Calu3 (cell line): ENCODE measurements at regions of chr5 and their contacts with region 1.

Region 1: DNA sequence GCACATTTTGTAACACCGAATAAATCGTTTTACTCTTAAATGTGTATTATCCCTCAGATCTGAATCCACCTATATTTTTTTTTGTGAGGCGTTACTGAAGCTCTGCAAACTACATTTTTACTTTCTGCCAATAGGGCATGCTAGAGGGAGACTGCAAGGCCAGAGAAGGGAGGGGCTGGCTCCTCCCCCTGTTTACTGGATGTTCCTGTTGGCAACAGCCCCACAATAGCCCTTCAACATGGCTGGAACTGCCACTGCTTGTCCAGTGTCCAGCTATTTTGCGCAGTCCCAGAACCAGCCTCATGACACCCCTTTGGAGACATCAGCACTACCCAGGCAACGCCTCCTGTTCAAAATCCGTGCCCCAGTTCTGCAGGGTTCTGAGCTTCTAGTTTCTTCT is 85.4 kb upstream of the MIER3 start:
- DNase-seq: no peak
- H3K4me3 Mint-ChIP-seq: no peak overlapping the region
- H3K27ac Mint-ChIP-seq: no peak overlapping the region
- H3K4me1 Mint-ChIP-seq: peaks cover 42% of the 10 kb centered on the region
- H3K27me3 Mint-ChIP-seq: no peaks in the 10 kb centered on the region
- CTCF ChIP-seq: no peak

Region 2: GRCh38 chr5:57004800-57005199 is 32.6 kb before region 1 on chr5:
- CTCF ChIA-PET with region 1: no interaction called
- intact Hi-C with region 1: loop called (anchors 5 kb)
- DNase-seq: peak; percentile 16
- H3K4me3 Mint-ChIP-seq: peak overlapping the region; percentile 4
- H3K27ac Mint-ChIP-seq: peak overlapping the region; percentile 68
- H3K4me1 Mint-ChIP-seq: peaks cover 41% of the 10 kb centered on the region
- H3K27me3 Mint-ChIP-seq: no peaks in the 10 kb centered on the region
- CTCF ChIP-seq: no peak